Activated CD4-positive, alpha-beta T cell treated with anti-CD3 and anti-CD28 coated beads, Interleukin-2, amount 10 ng/mL, durations not matched to agents 24 days and 14 days (primary cell): ENCODE measurements at regions of chr10 and their contacts with region 1.

Region 1: GRCh38 chr10:68901104-68901927 is at the start of gene DDX50:
- DNase-seq: peak; percentile 99
- H3K4me3 Mint-ChIP-seq: peak within 1 kb of the TSS; percentile 96
- H3K27ac Mint-ChIP-seq: peak within 1 kb of the TSS; percentile 99
- H3K4me1 Mint-ChIP-seq: peaks cover 39% of the 10 kb centered on the region
- H3K27me3 Mint-ChIP-seq: peaks cover 3% of the 10 kb centered on the region
- total RNA-seq, gene DDX50: 60.2 and 63.0 TPM in 2 replicates

Region 2: GRCh38 chr10:68074775-68075549 is 826.4 kb before region 1 on chr10 and contains the start of gene HERC4:
- intact Hi-C with region 1: loop called (anchors 2 kb)
- DNase-seq: peak; percentile 96
- H3K4me3 Mint-ChIP-seq: peak within 1 kb of the TSS; percentile 94
- H3K27ac Mint-ChIP-seq: peak within 1 kb of the TSS; percentile 91
- H3K4me1 Mint-ChIP-seq: peaks cover 31% of the 10 kb centered on the region
- H3K27me3 Mint-ChIP-seq: no peaks in the 10 kb centered on the region
- total RNA-seq, gene HERC4: 45.2 and 49.1 TPM in 2 replicates

Region 3: DNA sequence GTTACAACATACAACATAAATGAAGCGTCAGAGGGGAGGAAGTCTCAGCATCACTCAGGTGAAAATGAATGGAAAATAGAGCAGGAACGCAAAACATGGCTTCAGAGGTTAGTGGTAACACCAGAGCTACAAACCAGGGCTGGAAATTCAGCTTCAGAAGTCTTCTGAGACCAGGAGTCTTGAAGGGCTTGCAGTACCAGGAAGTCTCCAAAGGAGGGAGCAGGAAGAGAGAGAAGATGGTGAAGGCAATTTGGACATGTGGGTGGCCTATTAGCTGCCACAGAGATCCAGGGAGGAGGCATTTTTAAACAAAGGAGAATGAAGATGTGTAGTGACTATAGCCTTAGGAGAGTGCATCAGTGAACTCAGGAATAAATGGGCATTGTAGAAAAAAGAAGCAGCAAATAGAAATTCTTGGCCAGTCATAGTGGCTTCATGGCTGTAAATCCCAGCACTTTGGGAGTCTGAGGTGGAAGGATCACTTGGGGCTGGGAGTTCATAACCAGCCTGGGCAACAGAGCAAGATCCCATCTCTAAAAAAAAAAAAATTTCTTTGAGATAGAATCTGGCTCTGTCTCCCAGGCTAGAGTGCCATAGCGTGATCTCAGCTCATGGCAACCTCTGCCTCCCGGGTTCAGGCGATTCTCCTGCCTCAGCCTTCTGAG is 350.4 kb before region 1 on chr10:
- intact Hi-C with region 1: loop called (anchors 2 kb)
- DNase-seq: peak; percentile 86
- H3K4me3 Mint-ChIP-seq: no peak overlapping the region
- H3K27ac Mint-ChIP-seq: no peak overlapping the region
- H3K4me1 Mint-ChIP-seq: no peaks in the 10 kb centered on the region
- H3K27me3 Mint-ChIP-seq: no peaks in the 10 kb centered on the region

Region 4: DNA sequence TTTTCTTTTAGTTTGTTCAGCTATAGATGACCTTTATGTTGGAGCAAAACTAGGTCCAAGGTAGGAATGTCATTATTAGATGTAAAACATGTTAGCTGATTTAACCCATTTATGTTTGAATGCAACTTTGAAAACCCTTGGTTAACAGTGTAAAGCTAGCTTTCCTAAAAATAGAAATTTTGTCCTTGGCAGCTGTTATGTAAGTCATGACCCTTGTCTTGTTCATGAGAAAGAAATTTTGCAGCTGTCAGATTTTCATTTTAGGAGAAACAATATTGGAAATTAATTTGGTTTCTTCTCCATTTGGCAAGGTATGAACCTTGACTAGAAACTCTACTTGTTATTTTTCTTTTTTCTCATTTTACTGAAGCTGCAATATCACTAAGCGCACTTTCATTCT is 204.2 kb before region 1 on chr10:
- intact Hi-C with region 1: no loop called
- DNase-seq: no peak
- H3K4me3 Mint-ChIP-seq: no peak overlapping the region
- H3K27ac Mint-ChIP-seq: no peak overlapping the region
- H3K4me1 Mint-ChIP-seq: no peaks in the 10 kb centered on the region
- H3K27me3 Mint-ChIP-seq: peaks cover 6% of the 10 kb centered on the region

Region 5: DNA sequence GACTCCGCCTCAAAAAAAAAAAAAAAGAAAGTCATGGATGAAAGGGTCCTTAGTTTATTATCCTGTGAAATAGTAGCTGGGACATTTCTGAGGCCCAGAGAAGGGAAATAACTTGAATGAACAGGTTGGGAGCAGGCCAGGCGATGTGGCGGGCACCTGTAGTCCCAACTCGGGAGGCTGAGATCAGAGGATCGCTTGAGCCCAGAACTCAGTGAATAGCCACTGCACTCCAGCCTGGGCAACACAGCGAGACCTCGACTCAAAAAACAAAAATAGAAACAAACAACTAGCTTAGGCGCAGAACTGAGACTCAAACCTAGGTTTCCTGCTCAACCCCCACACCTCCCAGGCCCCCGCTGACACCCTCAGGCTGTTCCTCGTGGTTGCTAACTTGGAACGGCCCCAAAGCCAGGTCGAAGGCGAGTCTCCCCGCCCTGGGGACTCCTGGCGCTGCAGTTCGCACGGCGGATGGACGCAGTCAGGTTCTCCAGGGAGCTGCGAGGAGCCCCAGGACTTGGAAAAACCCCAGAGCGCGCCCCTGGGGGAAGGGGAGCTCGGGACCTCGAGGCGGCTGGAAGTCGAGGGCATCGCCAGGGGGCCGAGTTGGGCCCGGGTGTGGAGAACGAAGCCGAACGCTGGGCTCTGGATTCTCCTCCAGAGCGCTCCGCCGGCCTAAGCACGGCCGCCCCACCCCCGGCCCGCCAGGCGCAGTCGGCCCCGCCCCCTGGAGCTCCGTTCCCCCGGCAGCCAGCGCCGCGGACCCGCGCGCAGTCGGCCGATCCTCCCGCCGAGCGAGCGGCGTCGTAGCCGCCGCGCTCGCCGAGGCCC is 74.3 kb before region 1 on chr10 and contains the start of gene STOX1:
- intact Hi-C with region 1: loop called (anchors 2 kb)
- DNase-seq: peak; percentile 87
- H3K4me3 Mint-ChIP-seq: peak within 1 kb of the TSS; percentile 80
- H3K27ac Mint-ChIP-seq: no peak within 1 kb of the TSS
- H3K4me1 Mint-ChIP-seq: peaks cover 5% of the 10 kb centered on the region
- H3K27me3 Mint-ChIP-seq: peaks cover 23% of the 10 kb centered on the region
- total RNA-seq, gene STOX1: 0.76 and 0.82 TPM in 2 replicates

Region 6: DNA sequence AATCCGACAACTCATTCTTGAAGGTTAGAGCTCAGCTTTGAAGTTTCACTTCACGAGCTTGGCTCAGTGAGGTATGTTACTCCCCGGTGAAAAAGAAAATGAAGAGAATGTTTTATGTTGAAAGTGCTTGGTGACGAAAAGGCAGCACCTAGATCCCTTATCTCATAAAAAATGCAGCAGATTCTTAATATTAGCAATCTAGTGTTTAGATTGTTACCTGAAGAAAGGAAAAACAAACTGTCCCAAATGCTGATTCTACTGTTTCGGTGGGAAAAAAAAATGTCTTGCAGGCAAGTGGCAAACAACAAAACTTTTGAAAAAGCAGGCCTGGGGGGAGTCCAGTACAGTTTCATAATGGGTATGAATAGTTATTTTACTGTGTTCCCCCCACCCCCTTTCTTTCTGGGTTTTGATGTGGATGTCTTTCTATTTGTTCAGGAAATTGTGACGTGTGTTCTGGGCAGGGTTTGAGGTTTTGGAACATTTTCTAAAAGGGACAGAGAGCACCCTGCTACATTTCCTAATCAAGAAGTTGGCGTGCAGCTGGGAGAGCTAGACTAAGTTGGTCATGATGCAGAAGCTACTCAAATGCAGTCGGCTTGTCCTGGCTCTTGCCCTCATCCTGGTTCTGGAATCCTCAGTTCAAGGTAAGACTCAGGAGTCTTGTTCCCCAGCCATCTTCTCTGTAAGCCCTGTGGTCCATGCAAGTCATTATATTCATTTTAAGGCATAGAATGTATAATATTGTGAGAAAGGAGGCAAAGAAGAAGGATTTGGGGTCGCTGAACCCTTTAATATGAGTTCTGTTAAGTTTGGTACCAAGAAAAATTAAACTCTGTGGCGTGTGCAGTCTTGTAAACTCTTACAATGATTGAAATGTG is 186.5 kb after region 1 on chr10 and contains the start of gene SRGN:
- intact Hi-C with region 1: loop called (anchors 2 kb)
- DNase-seq: peak; percentile 95
- H3K4me3 Mint-ChIP-seq: peak within 1 kb of the TSS; percentile 88
- H3K27ac Mint-ChIP-seq: peak within 1 kb of the TSS; percentile 93
- H3K4me1 Mint-ChIP-seq: peaks cover 50% of the 10 kb centered on the region
- H3K27me3 Mint-ChIP-seq: no peaks in the 10 kb centered on the region
- total RNA-seq, gene SRGN: 996 and 999 TPM in 2 replicates

Region 7: DNA sequence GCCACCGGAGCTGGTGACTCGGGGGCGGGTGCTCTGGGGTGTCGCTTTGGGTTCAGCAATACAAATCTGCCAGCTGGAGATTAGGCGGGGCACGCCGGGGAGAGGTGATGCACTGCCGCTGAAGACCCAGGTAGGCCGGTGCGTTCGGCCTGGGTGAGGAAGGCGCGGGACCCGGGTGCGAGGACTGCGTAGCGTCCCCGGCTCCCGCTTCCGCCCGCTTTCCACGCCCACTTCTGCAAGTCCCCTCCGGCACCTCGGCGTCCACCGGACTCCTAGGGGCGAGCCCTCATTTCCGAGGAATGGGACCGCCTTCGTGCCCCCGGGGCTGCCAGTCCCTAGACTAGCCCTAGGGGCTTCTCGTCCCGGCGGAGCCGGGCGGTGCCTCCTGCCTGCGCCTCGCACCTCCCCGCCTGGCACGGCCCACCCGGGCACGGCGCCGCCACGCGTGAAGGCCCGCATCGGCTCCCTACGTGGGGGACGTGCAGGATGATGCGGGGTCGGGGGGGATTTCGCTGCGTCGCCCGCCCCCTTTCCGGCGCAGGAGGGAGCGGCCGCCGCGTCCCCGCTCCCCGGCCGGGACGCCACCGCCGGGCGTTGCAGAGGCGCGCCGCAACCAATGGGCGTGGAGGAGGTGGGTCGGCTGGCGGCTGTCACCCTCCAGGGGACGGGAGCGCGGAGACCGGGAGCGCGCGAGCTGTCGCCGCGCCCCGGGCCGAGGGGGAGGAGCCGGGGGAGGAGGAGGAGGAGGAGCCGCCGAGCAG is 417.0 kb after region 1 on chr10:
- intact Hi-C with region 1: loop called (anchors 2 kb)
- DNase-seq: peak; percentile 98
- H3K4me3 Mint-ChIP-seq: peak overlapping the region; percentile 98
- H3K27ac Mint-ChIP-seq: peak overlapping the region; percentile 98
- H3K4me1 Mint-ChIP-seq: peaks cover 30% of the 10 kb centered on the region
- H3K27me3 Mint-ChIP-seq: no peaks in the 10 kb centered on the region